ENCODE measurements at regions of chr10 and their contacts with region 1.

Region 1: DNA sequence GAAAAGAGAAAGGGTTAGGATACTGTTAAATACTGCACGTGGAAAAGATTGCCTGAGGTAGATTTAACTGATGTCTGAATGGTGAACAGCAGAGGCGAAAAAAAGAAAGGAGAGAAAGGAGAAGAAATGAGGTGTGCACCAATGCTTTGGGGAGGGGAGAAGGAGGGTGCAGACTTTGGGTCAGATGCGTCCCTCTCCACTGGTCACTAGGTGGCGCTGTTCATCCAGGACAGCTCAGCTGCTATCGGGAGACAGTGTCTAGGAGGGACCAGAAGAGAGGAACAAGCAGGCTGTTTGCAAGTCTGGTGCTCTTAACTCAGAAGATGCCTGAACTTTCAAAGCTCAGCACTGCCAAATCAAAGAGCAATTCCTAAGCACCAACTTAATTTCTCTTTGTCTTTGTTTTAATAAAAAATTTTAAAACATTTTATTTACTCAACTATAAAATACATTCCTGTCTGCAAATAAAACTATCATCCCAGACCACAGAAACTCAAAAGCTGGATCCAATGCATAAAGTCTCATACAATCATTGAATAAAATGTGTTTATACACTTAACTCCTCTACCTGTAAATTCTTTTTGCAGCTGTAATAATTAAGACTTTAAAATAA is 83.9 kb upstream of the PDLIM1 start:
- DNase-seq: peak; percentile 88
- H3K4me3 Mint-ChIP-seq: no peak overlapping the region
- H3K27ac Mint-ChIP-seq: no peak overlapping the region
- H3K4me1 Mint-ChIP-seq: no peaks in the 10 kb centered on the region
- H3K27me3 Mint-ChIP-seq: peaks cover 29% of the 10 kb centered on the region
- CTCF ChIP-seq: peak; percentile 95

Region 2: DNA sequence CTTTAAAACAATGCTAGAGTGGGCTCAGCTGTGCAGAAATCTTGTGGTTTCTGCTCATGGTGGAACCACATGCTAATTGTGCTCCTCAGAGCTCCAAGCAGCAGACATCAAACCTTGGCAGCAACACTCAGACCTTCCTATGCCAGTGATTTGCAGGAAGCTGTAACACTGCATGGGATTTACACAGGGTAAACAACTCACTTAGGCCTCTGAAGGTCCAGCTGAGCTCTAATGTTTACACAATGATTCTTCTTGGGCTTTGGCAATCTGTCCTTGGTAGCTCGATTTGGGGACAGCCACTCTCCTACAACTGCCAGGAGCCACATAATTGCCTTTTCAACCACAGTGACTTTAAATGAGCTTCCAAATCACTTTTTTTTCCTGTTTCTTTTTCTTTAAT is 13.8 kb after region 1 on chr10:
- CTCF ChIA-PET with region 1: interaction called, 100 read pairs
- POLR2A ChIA-PET with region 1: interaction called, 3 read pairs
- intact Hi-C with region 1: loop called (anchors 1 kb)
- DNase-seq: no peak
- H3K4me3 Mint-ChIP-seq: no peak overlapping the region
- H3K27ac Mint-ChIP-seq: no peak overlapping the region
- H3K4me1 Mint-ChIP-seq: peaks cover 1% of the 10 kb centered on the region
- H3K27me3 Mint-ChIP-seq: no peaks in the 10 kb centered on the region
- CTCF ChIP-seq: no peak

Region 3: GRCh38 chr10:95423164-95424005 is 48.7 kb after region 1 on chr10:
- CTCF ChIA-PET with region 1: interaction called, 185 read pairs
- POLR2A ChIA-PET with region 1: no interaction called
- intact Hi-C with region 1: no loop called
- DNase-seq: no peak
- H3K4me3 Mint-ChIP-seq: no peak overlapping the region
- H3K27ac Mint-ChIP-seq: no peak overlapping the region
- H3K4me1 Mint-ChIP-seq: no peaks in the 10 kb centered on the region
- H3K27me3 Mint-ChIP-seq: peaks cover 10% of the 10 kb centered on the region
- CTCF ChIP-seq: no peak

Region 4: DNA sequence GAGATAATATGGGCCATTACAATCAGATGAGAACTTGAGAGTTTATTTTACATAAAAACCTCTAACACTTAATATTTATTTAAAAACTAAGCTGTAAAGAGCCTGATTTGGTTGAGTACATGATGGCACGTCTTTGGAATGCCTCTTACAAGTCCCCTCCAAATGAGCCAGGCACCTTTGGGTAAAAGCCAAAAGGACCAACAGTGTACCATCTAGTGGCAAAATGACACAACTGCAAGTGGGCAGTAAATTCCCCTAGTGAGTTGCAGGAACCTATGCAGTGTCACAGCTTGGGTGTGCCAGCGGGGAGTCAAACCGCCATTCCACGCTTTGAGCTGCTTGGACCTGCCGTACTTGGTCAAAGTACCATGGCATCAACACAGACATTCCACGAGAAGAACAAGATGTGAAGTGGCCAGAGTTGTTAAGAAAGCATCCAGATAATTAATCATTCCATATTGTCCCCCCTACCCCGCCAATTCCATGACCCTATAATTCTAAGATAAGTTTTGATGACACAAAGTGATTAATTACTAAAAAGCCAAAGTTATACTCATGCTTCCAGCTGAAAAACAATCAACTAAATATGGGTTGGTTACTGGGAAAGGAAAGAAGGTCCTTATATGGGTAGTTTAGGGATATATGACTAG is 71.3 kb after region 1 on chr10:
- CTCF ChIA-PET with region 1: interaction called, 47 read pairs
- POLR2A ChIA-PET with region 1: no interaction called
- intact Hi-C with region 1: no loop called
- DNase-seq: peak; percentile 82
- H3K4me3 Mint-ChIP-seq: no peak overlapping the region
- H3K27ac Mint-ChIP-seq: no peak overlapping the region
- H3K4me1 Mint-ChIP-seq: peaks cover 15% of the 10 kb centered on the region
- H3K27me3 Mint-ChIP-seq: no peaks in the 10 kb centered on the region
- CTCF ChIP-seq: peak; percentile 81

Region 5: DNA sequence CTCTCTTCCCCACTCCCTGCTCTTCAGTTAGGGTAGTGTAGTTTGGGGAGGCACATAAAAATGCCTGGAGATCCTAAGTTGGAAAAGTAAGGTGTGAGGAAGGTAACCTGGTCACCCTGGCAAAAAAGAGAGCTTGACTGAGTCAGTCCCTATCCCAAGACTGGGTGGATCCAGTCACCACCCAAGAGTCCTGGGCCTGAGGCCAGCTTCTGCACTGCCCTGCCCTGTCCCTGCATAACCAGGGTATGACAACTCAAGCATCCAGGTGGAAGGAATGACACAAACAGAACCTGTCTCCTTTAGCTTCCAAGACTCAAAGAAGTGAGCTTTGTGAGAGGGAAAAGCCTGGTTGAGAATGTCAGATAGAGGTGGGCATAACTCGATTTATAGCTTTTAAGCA is 213.3 kb after region 1 on chr10:
- CTCF ChIA-PET with region 1: interaction called, 29 read pairs
- POLR2A ChIA-PET with region 1: no interaction called
- intact Hi-C with region 1: no loop called
- DNase-seq: peak; percentile 27
- H3K4me3 Mint-ChIP-seq: no peak overlapping the region
- H3K27ac Mint-ChIP-seq: no peak overlapping the region
- H3K4me1 Mint-ChIP-seq: no peaks in the 10 kb centered on the region
- H3K27me3 Mint-ChIP-seq: peaks cover 10% of the 10 kb centered on the region
- CTCF ChIP-seq: no peak

Region 6: GRCh38 chr10:95651346-95652060 is 276.8 kb after region 1 on chr10:
- CTCF ChIA-PET with region 1: interaction called, 16 read pairs
- POLR2A ChIA-PET with region 1: no interaction called
- intact Hi-C with region 1: no loop called
- DNase-seq: no peak
- H3K4me3 Mint-ChIP-seq: no peak overlapping the region
- H3K27ac Mint-ChIP-seq: no peak overlapping the region
- H3K4me1 Mint-ChIP-seq: peaks cover 7% of the 10 kb centered on the region
- H3K27me3 Mint-ChIP-seq: no peaks in the 10 kb centered on the region
- CTCF ChIP-seq: no peak

Measured in MCF 10A (cell line).